GM13976 (cell line): ENCODE measurements at regions of chr11 and their contacts with region 1.

Region 1: GRCh38 chr11:65779851-65780577 is 762 bp downstream of the AP5B1 start:
- DNase-seq: peak; percentile 94
- CTCF ChIP-seq: peak; percentile 100

Region 2: GRCh38 chr11:65314501-65315203 is 465.4 kb before region 1 on chr11 and contains the start of gene CDC42EP2:
- in situ Hi-C with region 1: no loop called
- DNase-seq: peak; percentile 95
- CTCF ChIP-seq: no peak

Region 3: GRCh38 chr11:65821116-65821515 is 41.1 kb after region 1 on chr11:
- in situ Hi-C with region 1: loop called (anchors 10 kb)
- DNase-seq: no peak
- CTCF ChIP-seq: no peak